CD4-positive, alpha-beta memory T cell (primary cell): ENCODE measurements at regions of chr15 and their contacts with region 1.

Region 1: DNA sequence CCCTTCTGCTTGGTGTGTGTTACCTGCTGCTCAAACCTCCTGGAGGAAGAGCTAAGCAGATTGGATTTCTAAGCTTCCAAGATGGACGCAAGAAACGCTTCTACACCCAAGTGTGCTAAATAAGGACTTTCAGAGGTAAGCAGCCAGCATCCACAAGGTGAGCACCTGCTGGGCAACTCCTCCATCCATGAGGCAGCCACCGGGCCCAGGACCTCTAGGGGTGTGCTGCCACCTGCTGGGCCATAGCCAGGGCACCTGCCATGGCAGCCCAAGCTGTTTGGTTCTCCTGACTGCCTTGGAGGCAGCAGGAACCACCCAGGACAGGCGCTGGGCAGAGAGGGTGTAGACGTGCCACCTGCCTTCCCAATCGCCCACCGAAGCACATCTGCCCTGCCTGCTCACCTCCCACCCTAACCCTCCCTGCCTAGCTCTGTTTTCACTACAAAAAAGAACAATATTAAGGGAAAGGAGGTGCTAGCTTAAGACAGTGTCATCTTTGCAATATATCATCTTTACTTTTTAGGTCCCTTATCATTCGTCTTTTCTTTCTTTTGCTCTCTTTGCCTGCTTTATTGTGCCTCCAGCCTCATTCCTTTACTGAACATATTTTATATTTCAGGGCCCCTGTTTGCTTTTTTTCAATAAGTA is 12.9 kb downstream of the C15orf62 start:
- DNase-seq: peak; percentile 74 to 79 (median 75)
- H3K4me3 ChIP-seq: no peak overlapping the region
- H3K4me3 Mint-ChIP-seq: no peak overlapping the region
- H3K27ac ChIP-seq: no peak overlapping the region
- H3K27ac Mint-ChIP-seq: peak overlapping the region in 3 of 7 donors; percentile 23 to 73 (median 70)
- H3K4me1 ChIP-seq: peaks cover 12% of the 10 kb centered on the region
- H3K4me1 Mint-ChIP-seq: peaks cover 13 to 24% (median 17%) of the 10 kb centered on the region in 4 donors
- H3K27me3 ChIP-seq: no peaks in the 10 kb centered on the region
- H3K27me3 Mint-ChIP-seq: no peaks in the 10 kb centered on the region

Region 2: DNA sequence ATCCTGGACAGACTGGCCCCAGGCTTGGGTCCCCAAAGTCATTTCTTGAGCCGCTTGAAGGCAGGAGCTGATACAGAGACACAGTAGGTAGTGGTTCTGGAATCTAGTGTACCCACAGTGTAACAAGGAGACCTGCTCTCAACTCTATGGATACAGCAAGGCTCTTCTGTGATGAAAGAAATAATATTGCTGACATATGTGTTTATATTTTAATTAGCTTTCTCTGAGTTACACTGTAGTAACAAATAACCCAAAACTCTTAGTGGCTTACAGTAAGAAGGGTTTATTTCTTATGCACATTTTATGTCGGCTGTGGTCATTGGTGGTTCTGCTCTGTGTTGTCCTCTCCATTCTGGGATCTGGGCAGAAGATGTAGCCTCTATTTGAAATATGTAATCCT is 266.4 kb before region 1 on chr15:
- CTCF ChIA-PET with region 1: interaction called, 3 read pairs
- POLR2A ChIA-PET with region 1: no interaction called
- intact Hi-C with region 1: loop called (anchors 1 kb)
- DNase-seq: no peak
- H3K4me3 ChIP-seq: no peak overlapping the region
- H3K4me3 Mint-ChIP-seq: no peak overlapping the region
- H3K27ac ChIP-seq: no peak overlapping the region
- H3K27ac Mint-ChIP-seq: no peak overlapping the region
- H3K4me1 ChIP-seq: peaks cover 9% of the 10 kb centered on the region
- H3K4me1 Mint-ChIP-seq: peaks cover 6 to 13% (median 8%) of the 10 kb centered on the region in 4 donors
- H3K27me3 ChIP-seq: peaks cover 10% of the 10 kb centered on the region
- H3K27me3 Mint-ChIP-seq: peaks cover 17 to 20% of the 10 kb centered on the region in 2 donors

Region 3: GRCh38 chr15:40684381-40684780 is 98.3 kb before region 1 on chr15:
- CTCF ChIA-PET with region 1: interaction called, 120 read pairs
- POLR2A ChIA-PET with region 1: no interaction called
- intact Hi-C with region 1: loop called (anchors 5 kb)
- DNase-seq: no peak
- H3K4me3 ChIP-seq: no peak overlapping the region
- H3K4me3 Mint-ChIP-seq: no peak overlapping the region
- H3K27ac ChIP-seq: no peak overlapping the region
- H3K27ac Mint-ChIP-seq: peak overlapping the region in 2 of 7 donors; percentile 51 to 64
- H3K4me1 ChIP-seq: no peaks in the 10 kb centered on the region
- H3K4me1 Mint-ChIP-seq: no peaks in the 10 kb centered on the region
- H3K27me3 ChIP-seq: no peaks in the 10 kb centered on the region
- H3K27me3 Mint-ChIP-seq: no peaks in the 10 kb centered on the region

Region 4: GRCh38 chr15:40702077-40702476 is 80.6 kb before region 1 on chr15:
- CTCF ChIA-PET with region 1: interaction called, 40 read pairs
- POLR2A ChIA-PET with region 1: no interaction called
- intact Hi-C with region 1: loop called (anchors 2 kb)
- DNase-seq: peak in 4 of 5 donors; percentile 17 to 31 (median 22)
- H3K4me3 ChIP-seq: no peak overlapping the region
- H3K4me3 Mint-ChIP-seq: no peak overlapping the region
- H3K27ac ChIP-seq: no peak overlapping the region
- H3K27ac Mint-ChIP-seq: no peak overlapping the region
- H3K4me1 ChIP-seq: no peaks in the 10 kb centered on the region
- H3K4me1 Mint-ChIP-seq: peaks cover 0 to 2% (median 0%) of the 10 kb centered on the region in 4 donors
- H3K27me3 ChIP-seq: no peaks in the 10 kb centered on the region
- H3K27me3 Mint-ChIP-seq: no peaks in the 10 kb centered on the region

Region 5: DNA sequence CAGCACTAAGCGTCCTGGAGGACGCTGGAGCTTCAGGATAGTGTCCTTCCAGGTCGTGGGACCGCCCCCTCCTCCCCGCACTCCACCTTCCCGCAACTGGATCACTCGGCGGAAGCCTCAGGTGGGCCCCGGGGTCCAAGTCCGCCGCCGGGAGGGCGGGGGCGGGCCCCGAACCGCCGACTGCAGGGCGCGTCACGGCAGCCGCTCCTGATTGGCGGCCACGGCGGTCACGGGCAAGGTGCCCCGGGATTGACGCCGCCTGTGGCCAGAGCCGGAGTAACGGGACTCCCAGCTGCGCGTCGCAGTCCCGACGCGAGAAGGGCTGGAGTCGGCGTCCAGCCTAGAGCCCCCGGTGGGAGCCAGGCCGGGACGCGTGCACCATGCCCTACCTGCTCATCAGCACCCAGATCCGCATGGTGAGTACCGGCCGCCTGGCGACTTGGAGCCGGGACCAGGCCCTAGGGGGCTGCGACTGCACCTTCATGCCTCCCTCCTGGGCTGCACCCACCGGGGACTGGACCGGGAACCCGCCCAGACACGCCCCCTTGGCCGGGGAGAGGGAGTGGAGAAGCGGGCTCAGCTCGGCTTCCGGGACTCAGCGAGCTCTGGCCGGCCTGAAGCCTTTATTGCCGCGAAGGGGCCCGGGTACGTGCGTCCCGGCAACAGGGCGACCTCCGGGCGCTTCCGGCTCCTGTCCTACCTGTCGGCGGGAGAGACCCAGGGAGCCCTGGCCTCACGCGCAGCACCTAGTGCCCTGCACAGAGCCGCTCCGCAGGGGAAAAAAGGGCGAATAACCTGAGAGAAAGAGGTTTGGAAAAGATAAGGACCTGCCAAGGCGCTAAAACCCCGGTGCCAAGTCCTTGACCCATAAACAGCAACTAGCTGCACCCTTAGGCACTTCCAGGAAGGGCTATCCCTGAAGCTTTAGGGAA is 18.6 kb before region 1 on chr15 and contains the start of gene GCHFR:
- CTCF ChIA-PET with region 1: interaction called, 9 read pairs
- POLR2A ChIA-PET with region 1: interaction called, 5 read pairs
- intact Hi-C with region 1: loop called (anchors 2 kb)
- DNase-seq: peak; percentile 63 to 74 (median 71)
- H3K4me3 ChIP-seq: peak within 1 kb of the TSS; percentile 61 to 81
- H3K4me3 Mint-ChIP-seq: peak within 1 kb of the TSS; percentile 87 to 93 (median 90)
- H3K27ac ChIP-seq: peak within 1 kb of the TSS; percentile 64
- H3K27ac Mint-ChIP-seq: peak within 1 kb of the TSS; percentile 85 to 96 (median 93)
- H3K4me1 ChIP-seq: peaks cover 28% of the 10 kb centered on the region
- H3K4me1 Mint-ChIP-seq: peaks cover 12 to 34% (median 24%) of the 10 kb centered on the region in 4 donors
- H3K27me3 ChIP-seq: no peaks in the 10 kb centered on the region
- H3K27me3 Mint-ChIP-seq: no peaks in the 10 kb centered on the region
- total RNA-seq, gene GCHFR: 21.2 to 24.1 TPM

Region 6: GRCh38 chr15:40823572-40824343 is 41.1 kb after region 1 on chr15:
- CTCF ChIA-PET with region 1: no interaction called
- POLR2A ChIA-PET with region 1: no interaction called
- intact Hi-C with region 1: no loop called
- DNase-seq: no peak
- H3K4me3 ChIP-seq: no peak overlapping the region
- H3K4me3 Mint-ChIP-seq: no peak overlapping the region
- H3K27ac ChIP-seq: no peak overlapping the region
- H3K27ac Mint-ChIP-seq: no peak overlapping the region
- H3K4me1 ChIP-seq: no peaks in the 10 kb centered on the region
- H3K4me1 Mint-ChIP-seq: no peaks in the 10 kb centered on the region
- H3K27me3 ChIP-seq: no peaks in the 10 kb centered on the region
- H3K27me3 Mint-ChIP-seq: peaks cover 0 to 2% of the 10 kb centered on the region in 2 donors